Activated CD4-positive, alpha-beta T cell treated with anti-CD3 and anti-CD28 coated beads for 36 hours (primary cell): ENCODE measurements at regions of chr2 and their contacts with region 1.

Region 1: GRCh38 chr2:190843874-190844699 is 36.5 kb upstream of the GLS start:
- DNase-seq: peak; percentile 74
- ATAC-seq: peak; percentile 87
- H3K4me3 Mint-ChIP-seq: peak overlapping the region; percentile 43
- H3K27ac Mint-ChIP-seq: peak overlapping the region; percentile 82
- H3K4me1 Mint-ChIP-seq: peaks cover 45% of the 10 kb centered on the region
- H3K27me3 Mint-ChIP-seq: no peaks in the 10 kb centered on the region

Region 2: DNA sequence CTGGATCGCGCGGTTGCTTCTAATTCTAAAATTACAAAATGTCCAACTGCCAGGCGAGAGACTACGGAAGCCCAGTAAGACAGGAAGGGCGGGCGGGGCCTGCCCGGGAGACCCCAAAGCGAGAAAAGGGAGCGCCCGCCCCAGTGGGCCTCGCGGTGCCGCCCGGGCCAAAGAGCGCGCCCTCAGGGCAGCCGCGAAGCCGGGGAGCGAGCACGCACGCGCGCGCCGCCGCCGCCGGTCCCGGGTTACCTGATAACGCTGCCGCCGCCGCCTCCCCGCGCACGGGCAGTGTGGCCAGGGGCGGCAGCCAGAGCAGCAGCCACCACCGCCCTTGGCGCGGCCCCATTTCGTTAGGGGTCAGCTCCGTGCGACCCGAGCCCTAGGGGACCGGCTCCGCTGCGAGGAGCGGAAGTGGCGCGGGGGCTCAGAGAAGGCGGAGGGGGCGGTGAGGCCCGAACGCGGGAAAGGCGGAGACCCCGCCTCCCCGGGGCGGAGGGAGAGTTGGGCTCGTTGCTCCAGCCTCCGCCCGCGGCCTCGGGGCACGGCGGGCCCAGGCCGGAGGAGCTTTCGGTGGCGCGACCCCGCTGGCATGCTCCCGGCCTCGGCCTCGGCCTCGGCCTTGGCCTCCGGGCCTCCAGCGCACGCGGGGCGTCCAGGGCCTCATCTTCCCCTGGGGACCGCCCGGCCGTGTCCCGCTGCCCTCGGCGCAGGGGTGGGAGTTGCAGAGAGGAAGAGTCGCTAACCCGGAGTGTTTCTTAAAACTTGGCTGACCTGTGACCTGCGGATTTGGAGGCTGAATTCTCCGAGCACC is 309.6 kb before region 1 on chr2 and contains the start of gene NEMP2:
- CTCF ChIA-PET with region 1: no interaction called
- POLR2A ChIA-PET with region 1: no interaction called
- intact Hi-C with region 1: loop called in 1 of 2 experiments (anchors 5 kb)
- DNase-seq: peak; percentile 87
- ATAC-seq: peak; percentile 70
- H3K4me3 Mint-ChIP-seq: peak within 1 kb of the TSS; percentile 95
- H3K27ac Mint-ChIP-seq: peak within 1 kb of the TSS; percentile 98
- H3K4me1 Mint-ChIP-seq: peaks cover 52% of the 10 kb centered on the region
- H3K27me3 Mint-ChIP-seq: no peaks in the 10 kb centered on the region
- total RNA-seq, gene NEMP2: 24.6 to 25.1 TPM

Region 3: GRCh38 chr2:190679813-190680591 is 164.1 kb before region 1 on chr2:
- CTCF ChIA-PET with region 1: interaction called, 5 read pairs
- POLR2A ChIA-PET with region 1: interaction called, 4 read pairs
- intact Hi-C with region 1: loop called (anchors 1 kb)
- DNase-seq: peak; percentile 75
- ATAC-seq: no peak
- H3K4me3 Mint-ChIP-seq: peak overlapping the region; percentile 36
- H3K27ac Mint-ChIP-seq: peak overlapping the region; percentile 97
- H3K4me1 Mint-ChIP-seq: peaks cover 56% of the 10 kb centered on the region
- H3K27me3 Mint-ChIP-seq: no peaks in the 10 kb centered on the region

Region 4: DNA sequence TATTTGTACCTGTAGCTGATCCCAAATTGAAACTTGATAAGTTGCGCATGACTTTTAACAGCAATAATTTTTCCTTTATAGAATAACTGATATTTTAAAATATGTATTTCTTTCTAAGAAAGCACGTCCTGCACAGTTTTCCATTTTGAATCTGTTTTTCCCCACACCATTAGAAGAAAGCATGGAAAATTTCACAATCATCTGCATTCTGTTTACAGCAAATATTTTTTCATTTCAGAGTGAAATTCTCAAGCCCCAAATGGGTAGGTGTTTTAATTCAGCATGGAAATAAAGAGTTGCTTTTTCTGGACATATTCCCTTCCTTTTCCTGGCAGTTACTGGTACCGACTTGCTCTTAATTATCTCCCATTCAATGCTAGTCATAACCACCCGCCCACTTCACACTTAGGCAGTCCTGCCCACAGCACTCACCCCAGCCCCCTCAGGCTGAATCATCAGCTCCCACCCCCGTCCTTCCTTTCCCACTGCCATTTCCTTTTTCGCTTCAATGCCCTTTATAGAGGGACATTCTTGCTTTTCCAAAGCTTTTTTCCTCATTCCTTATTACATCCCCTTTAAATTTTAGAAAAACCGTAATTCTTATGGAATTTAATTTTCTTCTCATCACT is 52.6 kb before region 1 on chr2:
- CTCF ChIA-PET with region 1: interaction called, 3 read pairs
- POLR2A ChIA-PET with region 1: no interaction called
- intact Hi-C with region 1: loop called (anchors 1 to 2 kb)
- DNase-seq: peak; percentile 73
- ATAC-seq: peak; percentile 70
- H3K4me3 Mint-ChIP-seq: peak overlapping the region; percentile 11
- H3K27ac Mint-ChIP-seq: peak overlapping the region; percentile 77
- H3K4me1 Mint-ChIP-seq: peaks cover 49% of the 10 kb centered on the region
- H3K27me3 Mint-ChIP-seq: no peaks in the 10 kb centered on the region

Region 5: GRCh38 chr2:190911813-190912212 is 67.7 kb after region 1 on chr2:
- CTCF ChIA-PET with region 1: interaction called, 3 read pairs
- POLR2A ChIA-PET with region 1: no interaction called
- intact Hi-C with region 1: loop called in 1 of 2 experiments (anchors 2 kb)
- DNase-seq: no peak
- ATAC-seq: peak; percentile 94
- H3K4me3 Mint-ChIP-seq: no peak overlapping the region
- H3K27ac Mint-ChIP-seq: peak overlapping the region; percentile 73
- H3K4me1 Mint-ChIP-seq: peaks cover 46% of the 10 kb centered on the region
- H3K27me3 Mint-ChIP-seq: no peaks in the 10 kb centered on the region

Region 6: DNA sequence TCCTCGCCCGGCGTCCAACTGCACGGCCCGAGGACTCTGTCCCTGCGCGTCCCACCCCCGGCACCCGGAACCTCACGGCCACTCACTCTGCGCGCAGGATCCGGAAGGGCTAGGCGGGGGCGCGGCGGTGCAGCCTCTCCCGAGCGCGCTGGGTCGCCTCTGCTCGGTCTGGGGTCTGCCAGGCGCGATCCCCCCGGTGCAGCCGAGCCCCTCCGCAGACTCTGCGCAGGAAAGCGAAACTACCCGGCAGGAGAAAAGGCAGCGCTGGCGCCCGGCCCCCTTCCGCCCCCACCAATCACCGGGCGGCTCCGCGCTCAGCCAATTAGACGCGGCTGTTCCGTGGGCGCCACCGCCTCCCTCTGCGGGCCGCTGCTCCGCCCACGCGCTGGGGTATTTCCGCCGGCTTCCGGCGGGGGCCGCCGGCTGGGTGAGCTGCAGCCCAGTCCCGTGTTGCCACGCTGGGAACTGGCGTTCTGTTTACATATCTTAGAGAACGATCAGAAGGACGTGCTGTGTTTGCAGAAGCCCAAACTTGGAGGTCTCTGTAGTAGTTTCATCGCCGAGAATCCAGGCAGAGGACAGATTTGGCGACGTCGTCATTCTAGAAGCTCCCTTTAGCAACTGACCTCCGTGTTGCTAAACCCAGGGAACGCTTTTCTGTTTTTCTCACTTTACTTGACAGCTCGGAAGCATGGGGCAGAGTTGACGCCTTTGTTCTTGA is 170.0 kb after region 1 on chr2 and contains the start of gene STAT1:
- CTCF ChIA-PET with region 1: no interaction called
- POLR2A ChIA-PET with region 1: interaction called, 3 read pairs
- intact Hi-C with region 1: loop called in 1 of 2 experiments (anchors 1 kb)
- DNase-seq: peak; percentile 98
- ATAC-seq: peak; percentile 79
- H3K4me3 Mint-ChIP-seq: no peak within 1 kb of the TSS
- H3K27ac Mint-ChIP-seq: no peak within 1 kb of the TSS
- H3K4me1 Mint-ChIP-seq: peaks cover 41% of the 10 kb centered on the region
- H3K27me3 Mint-ChIP-seq: no peaks in the 10 kb centered on the region
- total RNA-seq, gene STAT1: 317 to 343 TPM

Region 7: GRCh38 chr2:191114403-191114886 is 270.4 kb after region 1 on chr2:
- CTCF ChIA-PET with region 1: no interaction called
- POLR2A ChIA-PET with region 1: no interaction called
- intact Hi-C with region 1: loop called in 1 of 2 experiments (anchors 2 kb)
- DNase-seq: peak; percentile 49
- ATAC-seq: peak; percentile 22
- H3K4me3 Mint-ChIP-seq: peak overlapping the region; percentile 30
- H3K27ac Mint-ChIP-seq: peak overlapping the region; percentile 82
- H3K4me1 Mint-ChIP-seq: peaks cover 62% of the 10 kb centered on the region
- H3K27me3 Mint-ChIP-seq: no peaks in the 10 kb centered on the region